ENCODE measurements at regions of chr17 and their contacts with region 1.

Region 1: GRCh38 chr17:38752119-38752929 is at the start of gene PSMB3:
- DNase-seq: peak; percentile 99
- H3K4me3 Mint-ChIP-seq: peak within 1 kb of the TSS; percentile 91
- H3K27ac Mint-ChIP-seq: peak within 1 kb of the TSS; percentile 95
- H3K4me1 Mint-ChIP-seq: peaks cover 48% of the 10 kb centered on the region
- H3K27me3 Mint-ChIP-seq: peaks cover 26% of the 10 kb centered on the region
- total RNA-seq, gene PSMB3: 368 to 369 TPM

Region 2: DNA sequence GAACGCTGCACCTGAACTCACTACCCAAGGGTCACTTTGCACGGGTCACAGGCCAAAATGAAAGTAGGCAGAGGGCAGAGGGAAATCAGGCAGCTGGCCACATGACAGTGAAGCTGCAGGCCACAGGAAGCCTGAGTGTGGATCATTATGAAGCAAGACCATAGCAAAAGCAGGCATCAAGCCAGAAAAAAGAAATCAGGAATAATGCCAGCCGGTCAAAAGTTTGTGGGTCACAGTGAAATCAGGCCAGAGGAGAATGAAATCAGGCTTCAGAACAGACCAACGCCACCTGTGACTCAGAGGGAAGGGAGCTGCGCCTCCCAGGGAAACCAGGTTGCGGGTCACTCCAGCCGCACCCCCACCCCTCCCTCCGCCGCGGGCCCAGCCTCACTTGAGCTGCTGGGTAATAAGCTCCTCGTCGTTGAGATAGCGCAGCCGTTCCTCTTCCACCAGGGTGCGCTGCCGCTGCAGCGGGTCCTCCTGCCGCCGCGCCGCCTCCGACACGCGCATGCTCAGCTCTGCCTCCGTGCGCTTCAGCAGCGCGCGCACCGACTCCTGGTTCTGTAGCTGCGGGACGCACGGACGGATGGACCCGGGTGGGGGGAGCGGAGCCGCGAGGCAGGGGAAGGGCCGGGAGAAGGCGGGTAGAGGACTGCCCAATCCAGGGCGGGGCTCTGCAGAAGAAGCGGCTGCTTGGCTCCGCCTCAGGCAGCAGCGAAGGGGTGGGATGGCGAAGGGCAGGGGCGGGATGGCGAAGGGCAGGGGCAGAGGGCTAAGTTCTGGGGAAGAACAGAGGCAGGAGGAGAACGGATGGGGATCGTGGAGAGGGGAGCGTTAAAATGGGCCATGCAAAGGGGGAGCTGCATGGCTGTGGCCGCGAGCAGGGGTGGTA is 194.2 kb before region 1 on chr17:
- CTCF ChIA-PET with region 1: interaction called, 6 read pairs
- intact Hi-C with region 1: loop called (anchors 1 kb)
- DNase-seq: peak; percentile 92
- H3K4me3 Mint-ChIP-seq: peak overlapping the region; percentile 89
- H3K27ac Mint-ChIP-seq: no peak overlapping the region
- H3K4me1 Mint-ChIP-seq: peaks cover 21% of the 10 kb centered on the region
- H3K27me3 Mint-ChIP-seq: peaks cover 26% of the 10 kb centered on the region

Region 3: GRCh38 chr17:38598536-38598935 is 153.8 kb before region 1 on chr17:
- CTCF ChIA-PET with region 1: no interaction called
- intact Hi-C with region 1: no loop called
- DNase-seq: peak; percentile 51
- H3K4me3 Mint-ChIP-seq: no peak overlapping the region
- H3K27ac Mint-ChIP-seq: no peak overlapping the region
- H3K4me1 Mint-ChIP-seq: peaks cover 3% of the 10 kb centered on the region
- H3K27me3 Mint-ChIP-seq: peaks cover 76% of the 10 kb centered on the region

Region 4: DNA sequence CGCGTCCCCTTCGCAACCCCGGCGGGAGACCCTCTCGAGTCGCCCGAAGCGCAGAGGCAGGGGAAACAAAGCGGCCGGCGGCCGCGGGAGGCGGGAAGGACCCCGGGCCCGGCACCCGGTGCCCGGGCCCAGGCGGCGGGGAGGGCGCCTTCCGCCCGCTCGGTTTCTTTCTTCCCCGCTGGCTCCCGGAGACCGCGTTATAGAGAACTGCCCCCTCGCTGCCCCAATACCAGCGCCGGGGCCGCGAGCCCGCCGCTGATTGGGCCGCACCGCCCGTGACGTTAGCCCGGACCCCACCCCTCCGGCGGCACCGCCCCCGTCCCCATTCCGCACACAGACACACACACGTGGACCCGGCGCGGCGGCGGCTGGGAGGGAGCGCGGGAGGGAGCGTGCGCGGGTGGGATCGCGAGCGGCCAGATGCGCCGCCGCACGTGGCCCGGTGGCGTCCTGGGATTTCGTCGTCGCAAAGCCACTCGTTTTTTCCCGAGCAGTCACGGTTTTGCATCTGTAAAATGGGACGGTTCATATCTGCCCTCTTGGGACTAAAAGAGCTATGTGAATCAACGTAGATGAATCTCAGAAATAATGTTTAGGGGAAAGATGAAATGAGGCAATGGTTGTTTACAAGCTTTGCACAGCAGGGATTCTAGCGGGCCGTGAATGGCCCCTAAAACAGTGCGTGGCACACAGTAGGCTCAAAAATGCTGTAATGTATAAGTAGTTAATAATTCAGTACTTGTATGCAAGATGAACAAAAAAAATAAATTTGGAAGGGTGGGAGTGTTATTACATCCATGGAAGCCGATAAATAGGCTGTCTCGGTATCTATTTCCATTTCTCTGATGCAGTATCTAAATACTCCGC is 77.3 kb before region 1 on chr17 and contains the start of gene EPOP:
- CTCF ChIA-PET with region 1: interaction called, 9 read pairs
- intact Hi-C with region 1: loop called (anchors 1 kb)
- DNase-seq: peak; percentile 91
- H3K4me3 Mint-ChIP-seq: peak within 1 kb of the TSS; percentile 63
- H3K27ac Mint-ChIP-seq: peak within 1 kb of the TSS; percentile 84
- H3K4me1 Mint-ChIP-seq: peaks cover 52% of the 10 kb centered on the region
- H3K27me3 Mint-ChIP-seq: peaks cover 13% of the 10 kb centered on the region
- total RNA-seq, gene EPOP: 17.6 to 19.2 TPM

Region 5: GRCh38 chr17:38729886-38730525 is 22.3 kb before region 1 on chr17 and contains the start of gene CISD3:
- CTCF ChIA-PET with region 1: interaction called, 5 read pairs
- intact Hi-C with region 1: loop called (anchors 1 kb)
- DNase-seq: peak; percentile 84
- H3K4me3 Mint-ChIP-seq: peak within 1 kb of the TSS; percentile 94
- H3K27ac Mint-ChIP-seq: peak within 1 kb of the TSS; percentile 98
- H3K4me1 Mint-ChIP-seq: peaks cover 83% of the 10 kb centered on the region
- H3K27me3 Mint-ChIP-seq: no peaks in the 10 kb centered on the region
- total RNA-seq, gene CISD3: 35.1 to 35.8 TPM

Region 6: DNA sequence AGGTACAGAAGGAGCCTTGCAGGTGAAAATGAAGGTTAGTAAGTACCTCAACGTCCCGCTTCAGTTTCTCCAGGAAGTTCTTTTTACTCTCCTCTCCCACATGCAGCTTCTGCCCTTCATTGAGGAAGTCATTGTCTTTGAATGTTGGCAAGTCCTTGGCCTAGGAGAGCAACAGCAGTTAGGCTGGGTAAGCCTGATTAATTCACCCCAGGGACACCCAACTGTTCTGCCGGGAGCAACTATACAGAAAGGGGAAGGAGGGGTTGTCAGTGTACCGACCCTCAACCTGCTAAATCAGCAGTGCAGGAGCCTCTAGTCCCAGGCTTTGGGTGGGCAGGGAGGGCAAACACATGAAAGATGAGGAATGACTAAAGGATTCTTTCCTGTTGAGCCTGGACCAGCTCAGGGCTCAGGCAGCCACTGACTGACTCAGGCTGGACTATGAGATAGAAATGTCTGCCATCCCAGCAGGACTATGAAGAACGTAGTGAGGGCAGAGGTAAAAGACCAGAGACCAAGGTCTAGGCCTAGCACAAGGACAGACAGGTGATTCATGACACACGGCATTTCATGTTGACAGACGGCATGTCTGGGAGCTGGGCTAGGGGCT is 25.4 kb after region 1 on chr17:
- CTCF ChIA-PET with region 1: no interaction called
- intact Hi-C with region 1: no loop called
- DNase-seq: no peak
- H3K4me3 Mint-ChIP-seq: no peak overlapping the region
- H3K27ac Mint-ChIP-seq: no peak overlapping the region
- H3K4me1 Mint-ChIP-seq: no peaks in the 10 kb centered on the region
- H3K27me3 Mint-ChIP-seq: no peaks in the 10 kb centered on the region

Region 7: GRCh38 chr17:38853292-38854219 is 101.2 kb after region 1 on chr17 and contains the start of gene RPL23:
- CTCF ChIA-PET with region 1: no interaction called
- intact Hi-C with region 1: loop called (anchors 1 kb)
- DNase-seq: peak; percentile 95
- H3K4me3 Mint-ChIP-seq: peak within 1 kb of the TSS; percentile 96
- H3K27ac Mint-ChIP-seq: peak within 1 kb of the TSS; percentile 99
- H3K4me1 Mint-ChIP-seq: peaks cover 43% of the 10 kb centered on the region
- H3K27me3 Mint-ChIP-seq: no peaks in the 10 kb centered on the region
- total RNA-seq, gene RPL23: 2,241 to 2,332 TPM

Region 8: DNA sequence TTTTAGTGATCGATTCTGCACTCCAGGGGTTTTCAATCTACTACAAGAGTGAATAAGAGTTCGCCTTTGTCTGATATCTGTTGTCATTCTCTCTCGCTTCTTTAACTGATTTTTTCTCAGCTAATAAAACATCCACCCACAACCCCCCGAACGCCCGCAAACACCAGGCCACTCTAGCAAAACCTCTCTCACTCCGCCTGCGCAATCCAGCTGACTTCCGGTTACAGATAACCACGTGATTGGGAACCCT is 447.4 kb after region 1 on chr17:
- CTCF ChIA-PET with region 1: no interaction called
- intact Hi-C with region 1: loop called (anchors 2 kb)
- DNase-seq: peak; percentile 94
- H3K4me3 Mint-ChIP-seq: peak overlapping the region; percentile 86
- H3K27ac Mint-ChIP-seq: peak overlapping the region; percentile 99
- H3K4me1 Mint-ChIP-seq: peaks cover 50% of the 10 kb centered on the region
- H3K27me3 Mint-ChIP-seq: no peaks in the 10 kb centered on the region